ENCODE measurements at regions of chr15 and their contacts with region 1.

Region 1: GRCh38 chr15:67820992-67821783 is 4.1 kb upstream of the SKOR1 start:
- DNase-seq: peak; percentile 78
- H3K4me3 Mint-ChIP-seq: peak overlapping the region; percentile 15
- H3K27ac Mint-ChIP-seq: peak overlapping the region; percentile 62
- H3K4me1 Mint-ChIP-seq: peaks cover 20% of the 10 kb centered on the region
- H3K27me3 Mint-ChIP-seq: peaks cover 85% of the 10 kb centered on the region

Region 2: DNA sequence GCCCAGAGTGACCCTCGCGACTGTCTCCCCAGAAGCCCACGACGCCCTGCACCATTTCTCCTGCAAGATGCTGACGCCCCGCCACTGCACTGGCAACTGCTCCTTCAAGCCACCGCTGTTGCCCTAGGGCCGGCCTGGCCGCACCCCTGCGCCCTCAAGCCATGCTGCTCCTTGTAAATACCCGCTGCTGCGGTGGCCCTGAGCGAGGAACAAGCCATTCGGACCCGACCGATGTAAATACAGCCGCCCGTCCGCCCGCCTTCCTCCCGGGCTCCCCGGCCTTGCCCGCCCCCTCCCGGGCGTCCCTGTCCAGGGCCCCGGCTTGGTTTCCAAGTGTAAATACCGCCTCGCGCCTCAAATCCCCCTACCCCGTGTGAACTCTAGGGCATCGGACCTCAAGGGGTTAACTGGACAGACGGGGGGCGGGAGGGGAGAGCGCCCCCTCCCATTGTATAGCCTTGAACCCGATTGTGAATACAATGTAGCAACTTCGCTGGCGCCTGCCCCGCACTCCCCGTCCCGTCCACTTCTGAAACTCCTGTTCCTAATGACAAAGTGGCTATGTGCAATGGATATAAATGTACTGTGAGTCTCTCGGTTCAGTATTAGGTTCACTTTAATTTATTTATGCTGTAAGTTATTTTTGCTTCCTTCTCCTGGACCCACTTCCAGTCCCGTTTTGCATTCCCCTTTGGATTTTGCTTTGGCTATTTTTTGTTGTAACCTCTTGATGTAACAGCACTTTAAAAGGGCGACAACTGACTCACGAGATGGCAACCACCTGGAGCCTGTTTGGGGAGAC is 12.7 kb after region 1 on chr15:
- intact Hi-C with region 1: loop called (anchors 1 kb)
- DNase-seq: peak; percentile 83
- H3K4me3 Mint-ChIP-seq: peak overlapping the region; percentile 74
- H3K27ac Mint-ChIP-seq: peak overlapping the region; percentile 40
- H3K4me1 Mint-ChIP-seq: peaks cover 28% of the 10 kb centered on the region
- H3K27me3 Mint-ChIP-seq: peaks cover 84% of the 10 kb centered on the region

Measured in activated CD4-positive, alpha-beta T cell treated with anti-CD3 and anti-CD28 coated beads, Interleukin-2, amount 10 ng/mL, durations not matched to agents 24 days and 14 days (primary cell).